ENCODE measurements at regions of chrX and their contacts with region 1.

Region 1: GRCh38 chrX:47080215-47080914 is 2.1 kb downstream of the RGN start:
- DNase-seq: no peak
- H3K4me3 ChIP-seq: no peak overlapping the region
- H3K27ac ChIP-seq: no peak overlapping the region
- H3K4me1 ChIP-seq: no peaks in the 10 kb centered on the region
- H3K27me3 ChIP-seq: no peaks in the 10 kb centered on the region
- CTCF ChIP-seq: no peak
- POLR2A ChIP-seq: no peak

Region 2: GRCh38 chrX:46935295-46935694 is 145.1 kb before region 1 on chrX:
- intact Hi-C with region 1: no loop called
- DNase-seq: no peak
- H3K4me3 ChIP-seq: no peak overlapping the region
- H3K27ac ChIP-seq: no peak overlapping the region
- H3K4me1 ChIP-seq: no peaks in the 10 kb centered on the region
- H3K27me3 ChIP-seq: no peaks in the 10 kb centered on the region
- CTCF ChIP-seq: no peak
- POLR2A ChIP-seq: no peak

Region 3: DNA sequence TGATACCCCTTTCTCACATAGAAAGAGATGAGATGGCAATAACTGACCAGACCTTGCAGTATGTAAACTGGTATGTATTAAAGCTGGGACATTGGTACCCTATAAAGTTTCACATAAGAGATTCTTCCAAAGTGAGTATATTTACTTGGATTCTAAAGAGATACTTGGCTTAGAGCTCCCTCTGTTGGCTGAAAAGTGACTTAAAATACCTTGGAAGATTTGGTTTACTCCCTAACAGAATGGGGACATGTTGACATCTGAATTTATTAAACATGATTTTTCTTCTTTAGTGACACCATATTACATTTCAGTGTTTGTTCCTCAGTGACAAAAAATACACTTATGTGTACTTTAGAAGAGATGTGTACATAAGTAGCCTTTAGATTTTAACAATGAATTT is 50.0 kb before region 1 on chrX:
- intact Hi-C with region 1: loop called (anchors 10 kb)
- DNase-seq: peak; percentile 39
- H3K4me3 ChIP-seq: no peak overlapping the region
- H3K27ac ChIP-seq: no peak overlapping the region
- H3K4me1 ChIP-seq: no peaks in the 10 kb centered on the region
- H3K27me3 ChIP-seq: no peaks in the 10 kb centered on the region
- CTCF ChIP-seq: peak; percentile 22 to 62 (median 52)
- POLR2A ChIP-seq: no peak